Activated naive CD4-positive, alpha-beta T cell treated with anti-CD3 and anti-CD28 coated beads for 36 hours (primary cell): ENCODE measurements at regions of chr11 and their contacts with region 1.

Region 1: GRCh38 chr11:9460322-9461067 is at the start of gene ZNF143:
- DNase-seq: peak; percentile 100
- H3K4me3 Mint-ChIP-seq: peak within 1 kb of the TSS; percentile 96
- H3K27ac Mint-ChIP-seq: peak within 1 kb of the TSS; percentile 99
- H3K4me1 Mint-ChIP-seq: peaks cover 27% of the 10 kb centered on the region
- H3K27me3 Mint-ChIP-seq: no peaks in the 10 kb centered on the region
- total RNA-seq, gene ZNF143: 39.1 to 42.5 TPM

Region 2: GRCh38 chr11:8911029-8911826 is 549.3 kb before region 1 on chr11 and contains the start of gene AKIP1:
- CTCF ChIA-PET with region 1: no interaction called
- intact Hi-C with region 1: loop called (anchors 2 kb)
- DNase-seq: peak; percentile 91
- H3K4me3 Mint-ChIP-seq: peak within 1 kb of the TSS; percentile 92
- H3K27ac Mint-ChIP-seq: peak within 1 kb of the TSS; percentile 86
- H3K4me1 Mint-ChIP-seq: peaks cover 44% of the 10 kb centered on the region
- H3K27me3 Mint-ChIP-seq: no peaks in the 10 kb centered on the region
- total RNA-seq, gene AKIP1: 41.5 to 43.9 TPM

Region 3: DNA sequence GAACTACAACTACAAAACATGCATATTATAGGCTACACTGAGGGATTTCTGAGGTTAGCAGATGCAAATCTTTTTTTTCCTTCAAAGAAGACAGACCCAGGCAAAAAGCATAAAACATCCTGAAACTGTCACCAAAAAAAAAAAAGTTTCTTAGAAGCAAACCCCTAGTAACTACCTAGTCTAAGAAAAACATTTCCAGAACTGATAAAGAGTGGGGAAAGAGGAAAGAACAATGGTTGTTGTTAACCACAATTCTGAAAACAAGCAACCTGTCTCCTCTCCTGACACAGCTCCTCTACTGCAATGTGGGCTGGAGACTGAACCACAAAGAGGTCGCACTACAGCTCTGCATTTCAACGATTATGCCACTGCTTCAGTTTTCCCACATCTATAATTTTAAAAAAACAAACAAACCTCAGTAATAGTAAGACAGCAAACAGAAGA is 210.3 kb before region 1 on chr11:
- CTCF ChIA-PET with region 1: no interaction called
- intact Hi-C with region 1: loop called (anchors 1 kb)
- DNase-seq: peak; percentile 52
- H3K4me3 Mint-ChIP-seq: no peak overlapping the region
- H3K27ac Mint-ChIP-seq: peak overlapping the region; percentile 56
- H3K4me1 Mint-ChIP-seq: peaks cover 70% of the 10 kb centered on the region
- H3K27me3 Mint-ChIP-seq: no peaks in the 10 kb centered on the region

Region 4: DNA sequence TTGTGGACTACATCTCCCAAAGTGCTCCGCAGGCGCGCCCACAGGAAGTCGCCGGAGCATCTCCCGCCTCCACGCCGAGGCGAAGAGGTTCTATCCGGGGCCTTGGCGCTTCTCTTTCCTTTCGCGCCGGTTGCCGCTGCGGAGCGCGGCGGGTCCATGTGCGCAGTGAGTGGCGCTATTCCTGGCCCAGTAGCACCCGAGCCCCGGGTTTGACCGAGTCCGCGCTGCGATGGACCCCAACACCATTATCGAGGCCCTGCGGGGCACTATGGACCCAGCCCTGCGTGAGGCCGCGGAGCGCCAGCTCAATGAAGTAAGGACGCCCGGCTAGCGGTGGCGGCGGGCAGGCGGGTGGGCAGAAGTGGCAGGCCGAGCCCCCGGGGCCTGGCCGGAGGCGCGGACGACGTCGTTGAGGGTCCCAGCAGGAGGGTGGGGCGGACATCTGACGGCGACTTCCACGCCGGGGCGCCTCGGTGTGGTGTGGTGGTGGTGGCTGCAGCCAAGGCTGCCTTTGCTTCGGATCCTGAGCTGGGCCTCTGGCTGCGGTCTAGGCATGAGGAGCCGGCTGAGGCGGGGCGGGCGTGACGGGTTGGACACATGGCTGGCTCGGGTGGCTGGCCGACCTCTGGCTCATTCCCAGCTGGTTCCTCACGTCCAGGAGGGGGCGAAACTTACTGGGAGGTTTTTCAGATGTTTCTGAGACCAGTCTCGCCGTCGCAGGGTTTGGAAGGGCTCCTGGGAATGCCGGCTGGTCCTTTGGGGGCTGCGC is 75.8 kb before region 1 on chr11 and contains the start of gene IPO7:
- CTCF ChIA-PET with region 1: no interaction called
- intact Hi-C with region 1: loop called (anchors 1 kb)
- DNase-seq: peak; percentile 94
- H3K4me3 Mint-ChIP-seq: peak within 1 kb of the TSS; percentile 92
- H3K27ac Mint-ChIP-seq: peak within 1 kb of the TSS; percentile 83
- H3K4me1 Mint-ChIP-seq: peaks cover 36% of the 10 kb centered on the region
- H3K27me3 Mint-ChIP-seq: no peaks in the 10 kb centered on the region
- total RNA-seq, gene IPO7: 164 to 177 TPM

Region 5: GRCh38 chr11:9594267-9595046 is 134.0 kb after region 1 on chr11:
- CTCF ChIA-PET with region 1: no interaction called
- intact Hi-C with region 1: no loop called
- DNase-seq: no peak
- H3K4me3 Mint-ChIP-seq: no peak overlapping the region
- H3K27ac Mint-ChIP-seq: no peak overlapping the region
- H3K4me1 Mint-ChIP-seq: no peaks in the 10 kb centered on the region
- H3K27me3 Mint-ChIP-seq: peaks cover 2% of the 10 kb centered on the region

Region 6: DNA sequence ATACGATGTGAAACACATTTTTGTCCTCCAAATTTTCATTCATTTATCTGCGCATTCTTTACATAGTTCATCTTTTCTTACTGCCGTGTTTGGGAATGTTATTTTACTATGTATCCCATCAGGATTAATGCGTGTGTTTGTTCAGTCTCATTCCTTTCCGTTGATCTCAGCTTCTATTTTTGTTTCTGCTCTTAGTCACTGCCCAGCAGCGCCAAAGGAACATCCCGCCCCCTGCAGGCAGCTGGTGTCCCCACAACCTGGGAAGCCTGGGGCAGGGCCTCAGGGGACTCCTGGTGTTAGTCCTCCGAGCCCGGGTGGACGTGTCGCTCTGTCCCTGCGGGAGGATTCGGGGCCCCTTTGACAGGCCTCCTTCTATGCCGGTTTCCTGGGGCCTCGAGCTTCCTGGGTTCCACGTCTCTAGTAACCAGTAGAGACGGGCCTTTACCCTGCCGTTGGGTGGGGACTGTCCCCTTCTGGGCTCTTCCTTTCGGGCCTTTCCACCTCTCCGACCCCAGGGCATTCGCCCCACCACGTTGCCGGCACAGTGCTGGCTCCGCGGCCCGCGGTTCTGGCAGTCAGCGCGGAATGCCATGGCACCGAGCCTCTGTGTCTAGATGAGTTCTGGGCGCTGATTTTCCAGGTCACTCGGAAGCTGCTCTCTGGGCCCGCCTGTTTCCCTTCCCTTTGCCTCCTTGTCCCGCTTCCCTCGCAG is 152.8 kb after region 1 on chr11:
- CTCF ChIA-PET with region 1: interaction called, 5 read pairs
- intact Hi-C with region 1: loop called (anchors 1 kb)
- DNase-seq: peak; percentile 94
- H3K4me3 Mint-ChIP-seq: peak overlapping the region; percentile 86
- H3K27ac Mint-ChIP-seq: peak overlapping the region; percentile 98
- H3K4me1 Mint-ChIP-seq: peaks cover 38% of the 10 kb centered on the region
- H3K27me3 Mint-ChIP-seq: no peaks in the 10 kb centered on the region

Region 7: DNA sequence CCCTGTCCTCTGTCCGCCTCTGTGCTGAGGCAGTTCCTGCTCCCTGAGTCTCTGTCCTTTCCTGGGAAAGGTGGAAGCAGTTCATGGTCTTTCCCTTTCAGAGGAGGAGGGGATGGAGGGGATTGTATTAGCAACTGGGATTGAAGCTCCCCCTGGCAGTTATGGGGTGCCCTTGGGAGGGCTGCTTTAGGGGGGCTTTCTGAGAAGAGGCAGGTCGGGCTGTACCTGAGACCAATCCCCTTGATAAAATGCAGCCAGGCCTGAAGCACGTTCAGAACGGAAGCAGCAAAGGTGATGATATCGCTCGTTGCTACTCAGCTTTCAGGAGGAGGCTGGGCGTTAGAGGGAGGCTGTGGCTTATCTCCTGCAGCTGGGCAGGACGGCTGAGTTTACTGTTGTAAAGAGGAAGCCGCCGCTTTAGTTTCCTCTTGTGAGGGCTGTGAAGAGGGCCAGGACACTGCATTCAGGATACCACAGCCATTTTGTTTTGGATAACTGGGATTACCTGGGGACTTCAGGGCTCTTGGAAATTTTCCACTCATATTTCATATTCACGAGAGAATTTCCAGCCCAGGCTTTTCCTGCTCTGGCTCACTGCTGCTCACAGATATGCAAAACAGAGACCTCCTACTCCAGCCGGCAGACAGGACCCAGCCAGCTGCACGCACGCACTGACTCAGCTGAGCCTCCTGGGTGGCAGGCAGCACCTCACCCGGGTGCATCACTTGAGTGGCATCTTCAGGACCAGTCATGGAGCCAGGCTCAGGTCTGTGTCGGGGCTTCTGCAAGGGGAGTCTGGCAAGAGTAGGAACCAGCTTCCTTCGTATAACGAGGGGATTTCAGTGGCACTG is 995.4 kb after region 1 on chr11:
- CTCF ChIA-PET with region 1: no interaction called
- intact Hi-C with region 1: loop called (anchors 2 kb)
- DNase-seq: peak; percentile 87
- H3K4me3 Mint-ChIP-seq: peak overlapping the region; percentile 82
- H3K27ac Mint-ChIP-seq: peak overlapping the region; percentile 93
- H3K4me1 Mint-ChIP-seq: peaks cover 85% of the 10 kb centered on the region
- H3K27me3 Mint-ChIP-seq: no peaks in the 10 kb centered on the region